ENCODE measurements at regions of chr9 and their contacts with region 1.

Region 1: DNA sequence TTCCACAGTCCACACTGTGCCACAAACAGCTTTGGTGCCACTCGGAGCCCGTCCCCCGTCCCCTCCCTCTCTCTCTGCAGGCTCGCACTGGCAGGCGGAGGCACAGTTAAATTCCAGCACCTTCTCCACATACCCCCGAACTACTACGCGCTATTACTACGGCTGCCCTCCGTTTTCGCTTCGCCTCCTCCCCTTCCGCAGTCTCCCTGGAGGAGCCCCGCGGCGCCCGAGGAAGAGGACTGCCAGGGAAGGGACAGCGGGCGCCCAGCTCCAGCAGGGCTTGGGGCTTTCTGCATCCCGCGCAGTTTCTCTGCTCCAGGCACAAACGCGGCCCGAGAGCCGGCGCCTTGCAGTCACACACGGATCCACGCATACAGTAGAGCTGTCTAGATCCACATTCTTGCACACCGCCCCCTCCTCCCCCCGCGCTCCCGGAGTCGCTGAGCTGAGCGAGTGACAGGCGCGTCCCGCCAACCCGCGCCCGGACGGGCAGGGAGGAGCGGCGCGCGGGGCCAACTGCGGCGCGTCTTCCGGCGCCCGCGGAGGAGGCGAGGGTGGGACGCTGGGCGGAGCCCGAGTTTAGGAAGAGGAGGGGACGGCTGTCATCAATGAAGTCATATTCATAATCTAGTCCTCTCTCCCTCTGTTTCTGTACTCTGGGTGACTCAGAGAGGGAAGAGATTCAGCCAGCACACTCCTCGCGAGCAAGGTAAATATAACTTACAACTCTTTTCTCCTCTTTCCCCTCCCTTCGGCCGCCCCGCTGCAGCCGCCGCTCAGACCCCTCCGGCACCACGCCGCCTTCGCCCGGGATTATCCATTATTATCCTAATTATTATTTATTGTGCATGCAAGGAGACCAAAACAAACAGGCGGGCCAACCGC is at the start of gene SMARCA2:
- DNase-seq: peak; percentile 97
- H3K4me3 Mint-ChIP-seq: peak within 1 kb of the TSS; percentile 99
- H3K27ac Mint-ChIP-seq: peak within 1 kb of the TSS; percentile 99
- H3K4me1 Mint-ChIP-seq: peaks cover 44% of the 10 kb centered on the region
- H3K27me3 Mint-ChIP-seq: peaks cover 5% of the 10 kb centered on the region
- total RNA-seq, gene SMARCA2: 105 and 108 TPM in 2 replicates

Region 2: GRCh38 chr9:272251-273213 is 1742.4 kb before region 1 on chr9:
- intact Hi-C with region 1: loop called (anchors 5 kb)
- DNase-seq: peak; percentile 75
- H3K4me3 Mint-ChIP-seq: peak overlapping the region; percentile 83
- H3K27ac Mint-ChIP-seq: peak overlapping the region; percentile 94
- H3K4me1 Mint-ChIP-seq: peaks cover 60% of the 10 kb centered on the region
- H3K27me3 Mint-ChIP-seq: no peaks in the 10 kb centered on the region

Region 3: GRCh38 chr9:1804128-1804865 is 210.6 kb before region 1 on chr9:
- intact Hi-C with region 1: loop called (anchors 5 kb)
- DNase-seq: no peak
- H3K4me3 Mint-ChIP-seq: no peak overlapping the region
- H3K27ac Mint-ChIP-seq: no peak overlapping the region
- H3K4me1 Mint-ChIP-seq: no peaks in the 10 kb centered on the region
- H3K27me3 Mint-ChIP-seq: no peaks in the 10 kb centered on the region

Region 4: DNA sequence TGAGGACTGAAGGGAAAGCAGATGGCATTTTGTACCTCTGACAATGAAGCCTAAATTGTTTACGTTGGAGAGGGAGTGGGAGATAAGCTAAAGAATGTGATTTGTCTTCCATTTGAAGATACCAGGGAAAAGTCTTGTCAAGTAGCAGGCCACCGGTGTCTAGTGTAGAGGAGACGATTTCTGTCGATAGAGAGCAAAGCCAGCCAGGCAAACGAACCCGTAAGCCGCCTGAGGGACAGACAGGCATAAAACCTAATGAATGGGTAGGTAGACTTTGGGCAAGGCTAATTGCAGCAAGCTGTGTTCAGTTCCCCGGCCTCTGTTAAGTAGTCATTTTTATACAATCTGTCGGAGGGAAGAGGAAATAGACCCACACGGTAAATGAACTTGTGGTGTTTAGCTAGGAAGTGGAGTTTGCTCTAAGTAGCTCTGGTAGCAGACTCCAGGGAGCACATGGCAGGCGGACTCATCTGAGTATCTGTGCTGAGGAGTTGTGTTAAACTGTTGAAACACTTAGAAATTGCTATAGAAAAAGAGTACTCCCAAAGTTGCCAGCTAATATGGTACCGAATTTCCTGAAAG is 29.0 kb after region 1 on chr9:
- intact Hi-C with region 1: no loop called
- DNase-seq: no peak
- H3K4me3 Mint-ChIP-seq: no peak overlapping the region
- H3K27ac Mint-ChIP-seq: peak overlapping the region; percentile 15
- H3K4me1 Mint-ChIP-seq: peaks cover 39% of the 10 kb centered on the region
- H3K27me3 Mint-ChIP-seq: no peaks in the 10 kb centered on the region

Region 5: GRCh38 chr9:2053883-2054845 is 39.2 kb after region 1 on chr9:
- intact Hi-C with region 1: loop called (anchors 1 kb)
- DNase-seq: peak; percentile 68
- H3K4me3 Mint-ChIP-seq: peak overlapping the region; percentile 24
- H3K27ac Mint-ChIP-seq: peak overlapping the region; percentile 56
- H3K4me1 Mint-ChIP-seq: peaks cover 48% of the 10 kb centered on the region
- H3K27me3 Mint-ChIP-seq: no peaks in the 10 kb centered on the region

Region 6: GRCh38 chr9:2158111-2158610 is 143.2 kb after region 1 on chr9:
- intact Hi-C with region 1: loop called (anchors 1 kb)
- DNase-seq: peak; percentile 19
- H3K4me3 Mint-ChIP-seq: peak overlapping the region; percentile 93
- H3K27ac Mint-ChIP-seq: peak overlapping the region; percentile 96
- H3K4me1 Mint-ChIP-seq: peaks cover 35% of the 10 kb centered on the region
- H3K27me3 Mint-ChIP-seq: no peaks in the 10 kb centered on the region

Region 7: GRCh38 chr9:2193552-2193951 is 178.6 kb after region 1 on chr9:
- intact Hi-C with region 1: loop called (anchors 1 kb)
- DNase-seq: no peak
- H3K4me3 Mint-ChIP-seq: no peak overlapping the region
- H3K27ac Mint-ChIP-seq: peak overlapping the region; percentile 1
- H3K4me1 Mint-ChIP-seq: peaks cover 15% of the 10 kb centered on the region
- H3K27me3 Mint-ChIP-seq: no peaks in the 10 kb centered on the region

Region 8: GRCh38 chr9:2764353-2764752 is 749.4 kb after region 1 on chr9:
- intact Hi-C with region 1: loop called (anchors 5 kb)
- DNase-seq: peak; percentile 45
- H3K4me3 Mint-ChIP-seq: peak overlapping the region; percentile 17
- H3K27ac Mint-ChIP-seq: peak overlapping the region; percentile 89
- H3K4me1 Mint-ChIP-seq: peaks cover 39% of the 10 kb centered on the region
- H3K27me3 Mint-ChIP-seq: no peaks in the 10 kb centered on the region